Heart left ventricle (tissue), 16 donors: ENCODE measurements at regions of chr15 and their contacts with region 1.

Region 1: GRCh38 chr15:76139368-76140073 is 79.7 kb downstream of the TMEM266 start:
- DNase-seq: peak in 4 of 5 donors; percentile 59 to 68 (median 64)
- ATAC-seq: peak; percentile 22 to 87 (median 83)
- H3K4me3 ChIP-seq: peak overlapping the region in 9 of 12 donors; percentile 1 to 34 (median 21)
- H3K27ac ChIP-seq: peak overlapping the region in 2 of 12 donors; percentile 13 to 36
- H3K4me1 ChIP-seq: peaks cover 0 to 16% (median 5%) of the 10 kb centered on the region in 12 donors
- H3K27me3 ChIP-seq: peaks cover 0 to 11% (median 0%) of the 10 kb centered on the region in 9 donors
- CTCF ChIP-seq: peak; percentile 78 to 95 (median 86)
- POLR2A ChIP-seq: no peak

Region 2: GRCh38 chr15:75801859-75802593 is 337.5 kb before region 1 on chr15:
- intact Hi-C with region 1: loop called in 2 of 10 experiments (anchors 5 to 10 kb)
- DNase-seq: peak; percentile 78 to 92 (median 84)
- ATAC-seq: peak; percentile 93 to 99 (median 98)
- H3K4me3 ChIP-seq: peak overlapping the region in 8 of 12 donors; percentile 11 to 40 (median 29)
- H3K27ac ChIP-seq: no peak overlapping the region
- H3K4me1 ChIP-seq: peaks cover 0 to 16% (median 4%) of the 10 kb centered on the region in 12 donors
- H3K27me3 ChIP-seq: peaks cover 0 to 27% (median 0%) of the 10 kb centered on the region in 9 donors
- CTCF ChIP-seq: peak; percentile 79 to 98 (median 92)
- POLR2A ChIP-seq: no peak

Region 3: DNA sequence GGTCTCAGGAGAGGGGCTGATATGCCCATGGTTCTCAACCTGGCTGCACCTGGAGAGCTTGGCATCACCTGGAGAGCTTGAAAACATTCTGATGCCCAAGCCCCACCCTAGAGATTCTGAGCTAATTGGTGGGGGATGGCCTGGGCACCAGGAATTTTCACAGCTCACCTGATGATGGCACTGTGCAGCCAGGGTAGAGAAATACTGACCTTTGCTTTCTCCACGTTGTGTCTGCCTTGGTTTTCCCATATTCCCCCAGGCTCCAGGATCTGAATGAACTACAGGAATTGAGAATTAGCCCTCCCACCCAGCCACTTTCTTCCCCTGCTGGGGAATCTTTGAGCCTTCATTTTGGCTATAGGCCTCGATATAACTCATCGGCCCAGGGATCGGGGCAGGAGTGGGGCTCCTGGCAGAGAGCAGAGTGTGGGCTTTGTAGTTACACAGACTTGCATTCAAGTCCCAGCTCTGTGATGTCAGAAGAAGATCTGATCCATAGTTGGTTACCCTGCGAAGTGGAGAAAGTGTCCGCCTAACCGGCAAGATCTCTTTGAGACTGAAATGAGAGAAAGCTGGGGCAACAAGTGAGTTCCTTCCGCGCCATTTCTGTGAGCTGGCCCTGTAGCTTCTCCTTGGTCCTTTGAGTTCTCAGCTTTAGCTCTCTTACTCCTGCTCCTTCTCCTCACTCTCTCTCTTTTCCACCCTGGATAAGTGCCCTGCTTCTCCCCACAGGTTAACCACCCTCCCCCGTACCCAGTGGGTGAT is 329.4 kb before region 1 on chr15:
- intact Hi-C with region 1: loop called in 9 of 10 experiments (anchors 2 to 10 kb)
- DNase-seq: no peak
- ATAC-seq: peak in 2 of 4 donors; percentile 61 to 65
- H3K4me3 ChIP-seq: no peak overlapping the region
- H3K27ac ChIP-seq: no peak overlapping the region
- H3K4me1 ChIP-seq: no peaks in the 10 kb centered on the region
- H3K27me3 ChIP-seq: no peaks in the 10 kb centered on the region
- CTCF ChIP-seq: peak in 10 of 12 donors; percentile 14 to 53 (median 32)
- POLR2A ChIP-seq: no peak

Region 4: DNA sequence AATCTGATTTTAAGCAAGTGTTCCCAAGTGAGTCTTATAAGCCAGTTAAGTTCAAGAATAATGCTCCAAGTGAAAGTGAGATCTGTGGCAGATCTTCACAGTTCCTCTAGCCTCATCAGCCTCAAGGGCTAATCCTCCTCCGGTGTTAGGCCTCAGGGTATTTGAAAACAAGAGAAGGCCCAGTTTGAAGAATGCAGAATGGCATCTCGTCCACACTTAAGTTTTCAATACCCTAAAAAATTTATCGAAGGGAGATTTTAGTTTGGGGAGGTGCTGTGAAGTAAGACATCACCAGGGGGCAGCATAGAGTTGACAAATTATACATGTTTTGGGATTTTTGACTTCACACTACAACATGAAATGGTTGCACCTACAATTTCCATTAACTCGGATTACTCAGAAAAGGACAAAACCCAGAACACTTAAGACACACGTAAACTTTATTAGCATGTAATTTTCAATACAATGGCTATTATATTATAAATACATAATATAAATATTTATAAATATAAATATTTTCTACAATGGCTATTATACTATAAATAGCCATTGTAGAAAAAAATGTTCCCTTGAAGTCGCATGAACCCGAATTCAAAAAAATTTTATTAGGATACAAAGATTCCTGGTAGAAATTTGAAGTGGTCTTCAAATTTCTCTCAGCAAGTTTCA is 82.1 kb before region 1 on chr15:
- intact Hi-C with region 1: loop called in 9 of 10 experiments (anchors 1 to 2 kb)
- DNase-seq: peak in 1 of 5 donors; percentile 14
- ATAC-seq: no peak
- H3K4me3 ChIP-seq: peak overlapping the region in 1 of 12 donors; percentile 6
- H3K27ac ChIP-seq: no peak overlapping the region
- H3K4me1 ChIP-seq: peaks cover 0 to 23% (median 8%) of the 10 kb centered on the region in 12 donors
- H3K27me3 ChIP-seq: peaks cover 0 to 55% (median 17%) of the 10 kb centered on the region in 9 donors
- CTCF ChIP-seq: peak; percentile 56 to 80 (median 68)
- POLR2A ChIP-seq: no peak

Region 5: GRCh38 chr15:76065267-76065666 is 74.3 kb before region 1 on chr15:
- intact Hi-C with region 1: loop called in 1 of 10 experiments (anchors 2 kb)
- DNase-seq: no peak
- ATAC-seq: peak in 1 of 4 donors; percentile 54
- H3K4me3 ChIP-seq: no peak overlapping the region
- H3K27ac ChIP-seq: no peak overlapping the region
- H3K4me1 ChIP-seq: peaks cover 0 to 12% (median 0%) of the 10 kb centered on the region in 12 donors
- H3K27me3 ChIP-seq: peaks cover 0 to 64% (median 6%) of the 10 kb centered on the region in 9 donors
- CTCF ChIP-seq: no peak
- POLR2A ChIP-seq: no peak